Left ventricle myocardium inferior (tissue), 1 donor: ENCODE measurements at regions of chr18 and their contacts with region 1.

Region 1: GRCh38 chr18:55415258-55415871 is 172.6 kb downstream of the TCF4 start:
- DNase-seq: peak; percentile 89
- H3K4me3 ChIP-seq: peak overlapping the region; percentile 8
- H3K27ac ChIP-seq: peak overlapping the region; percentile 53
- H3K4me1 ChIP-seq: peaks cover 59% of the 10 kb centered on the region
- H3K27me3 ChIP-seq: no peaks in the 10 kb centered on the region
- CTCF ChIP-seq: peak; percentile 98

Region 2: DNA sequence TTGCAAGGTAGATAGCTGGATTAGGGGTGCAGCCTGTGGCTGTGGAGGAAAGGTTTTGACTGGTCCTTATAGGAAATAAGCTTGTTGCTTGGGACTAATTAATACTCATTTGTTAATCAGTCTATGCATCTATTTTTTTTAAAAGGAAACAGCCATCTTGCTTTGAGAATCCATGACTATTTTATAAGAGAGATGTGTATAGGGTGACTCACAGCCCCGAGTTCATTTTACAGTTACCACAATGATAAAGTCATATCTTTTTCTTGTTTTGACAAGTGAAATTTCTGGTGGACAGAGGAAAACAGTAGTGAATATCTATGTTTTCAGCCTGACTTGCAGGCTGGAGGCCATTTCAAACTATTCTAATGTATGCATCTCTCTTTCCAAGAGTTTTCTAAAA is 262.6 kb before region 1 on chr18:
- intact Hi-C with region 1: no loop called
- DNase-seq: no peak
- H3K4me3 ChIP-seq: no peak overlapping the region
- H3K27ac ChIP-seq: no peak overlapping the region
- H3K4me1 ChIP-seq: no peaks in the 10 kb centered on the region
- H3K27me3 ChIP-seq: no peaks in the 10 kb centered on the region
- CTCF ChIP-seq: no peak

Region 3: DNA sequence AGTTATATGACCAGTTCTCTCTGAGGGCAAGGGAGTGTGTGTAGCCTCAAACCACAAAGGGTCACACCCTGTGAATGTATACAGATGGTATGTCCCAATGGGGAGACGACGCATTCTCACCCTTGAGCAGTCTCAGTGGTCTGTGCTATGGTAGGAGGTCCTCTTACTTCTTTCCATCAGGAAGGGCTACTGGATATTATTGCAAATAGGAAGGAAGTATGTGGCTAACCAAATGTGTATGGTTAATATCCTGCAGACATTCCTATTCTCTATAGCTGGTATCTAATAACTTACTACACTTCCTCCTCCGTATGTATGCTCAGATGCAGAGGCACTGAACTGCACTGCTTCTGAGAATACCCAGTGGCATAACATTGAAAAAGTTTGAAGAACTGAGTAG is 149.4 kb before region 1 on chr18:
- intact Hi-C with region 1: no loop called
- DNase-seq: no peak
- H3K4me3 ChIP-seq: no peak overlapping the region
- H3K27ac ChIP-seq: peak overlapping the region; percentile 72
- H3K4me1 ChIP-seq: peaks cover 74% of the 10 kb centered on the region
- H3K27me3 ChIP-seq: no peaks in the 10 kb centered on the region
- CTCF ChIP-seq: no peak

Region 4: GRCh38 chr18:55781481-55781957 is 366.2 kb after region 1 on chr18:
- intact Hi-C with region 1: loop called (anchors 5 kb)
- DNase-seq: peak; percentile 35
- H3K4me3 ChIP-seq: no peak overlapping the region
- H3K27ac ChIP-seq: peak overlapping the region; percentile 94
- H3K4me1 ChIP-seq: peaks cover 44% of the 10 kb centered on the region
- H3K27me3 ChIP-seq: no peaks in the 10 kb centered on the region
- CTCF ChIP-seq: peak; percentile 75